ENCODE measurements at regions of chr2 and their contacts with region 1.

Region 1: DNA sequence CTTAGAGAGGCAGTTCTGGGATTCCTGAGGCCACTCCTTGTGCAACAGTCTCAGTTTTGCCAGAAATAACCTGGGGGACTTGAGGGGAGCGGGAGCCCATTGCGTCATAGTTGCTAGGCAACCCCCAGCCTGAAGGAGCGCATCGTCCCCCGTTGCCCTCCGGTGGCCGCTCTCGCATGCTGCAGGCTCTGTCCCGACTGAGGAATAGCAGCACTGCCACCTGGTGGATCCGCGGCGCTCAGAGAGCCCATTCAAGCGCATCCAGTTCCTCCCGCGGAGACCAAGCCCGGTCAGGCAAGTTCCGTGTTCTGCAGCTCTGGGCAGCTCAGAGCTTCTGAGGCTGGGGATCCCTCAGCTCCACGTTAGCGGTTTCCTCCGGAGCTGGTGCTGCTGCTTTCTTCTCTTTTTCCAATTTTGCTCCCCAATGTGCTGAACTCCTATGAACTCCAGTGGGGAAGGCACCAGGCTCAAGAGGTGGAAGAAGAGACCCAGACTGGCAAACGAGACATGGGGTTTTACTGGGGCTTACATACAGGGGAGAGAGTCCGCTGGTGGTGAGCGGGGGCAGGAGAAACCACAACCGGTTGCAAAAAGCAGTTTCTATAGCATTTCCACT is 15.1 kb downstream of the SLC4A3 start:
- DNase-seq: peak; percentile 99
- ATAC-seq: peak; percentile 68

Region 2: GRCh38 chr2:219543601-219544358 is 98.8 kb before region 1 on chr2 and contains the starts of genes CHPF and TMEM198:
- intact Hi-C with region 1: loop called (anchors 5 kb)
- DNase-seq: peak; percentile 99
- ATAC-seq: peak; percentile 92
- total RNA-seq, gene CHPF: 85.9 TPM
- total RNA-seq, gene TMEM198: 2.6 TPM

Region 3: GRCh38 chr2:219560037-219560892 is 82.3 kb before region 1 on chr2:
- intact Hi-C with region 1: loop called (anchors 5 kb)
- DNase-seq: no peak
- ATAC-seq: peak; percentile 30

Region 4: DNA sequence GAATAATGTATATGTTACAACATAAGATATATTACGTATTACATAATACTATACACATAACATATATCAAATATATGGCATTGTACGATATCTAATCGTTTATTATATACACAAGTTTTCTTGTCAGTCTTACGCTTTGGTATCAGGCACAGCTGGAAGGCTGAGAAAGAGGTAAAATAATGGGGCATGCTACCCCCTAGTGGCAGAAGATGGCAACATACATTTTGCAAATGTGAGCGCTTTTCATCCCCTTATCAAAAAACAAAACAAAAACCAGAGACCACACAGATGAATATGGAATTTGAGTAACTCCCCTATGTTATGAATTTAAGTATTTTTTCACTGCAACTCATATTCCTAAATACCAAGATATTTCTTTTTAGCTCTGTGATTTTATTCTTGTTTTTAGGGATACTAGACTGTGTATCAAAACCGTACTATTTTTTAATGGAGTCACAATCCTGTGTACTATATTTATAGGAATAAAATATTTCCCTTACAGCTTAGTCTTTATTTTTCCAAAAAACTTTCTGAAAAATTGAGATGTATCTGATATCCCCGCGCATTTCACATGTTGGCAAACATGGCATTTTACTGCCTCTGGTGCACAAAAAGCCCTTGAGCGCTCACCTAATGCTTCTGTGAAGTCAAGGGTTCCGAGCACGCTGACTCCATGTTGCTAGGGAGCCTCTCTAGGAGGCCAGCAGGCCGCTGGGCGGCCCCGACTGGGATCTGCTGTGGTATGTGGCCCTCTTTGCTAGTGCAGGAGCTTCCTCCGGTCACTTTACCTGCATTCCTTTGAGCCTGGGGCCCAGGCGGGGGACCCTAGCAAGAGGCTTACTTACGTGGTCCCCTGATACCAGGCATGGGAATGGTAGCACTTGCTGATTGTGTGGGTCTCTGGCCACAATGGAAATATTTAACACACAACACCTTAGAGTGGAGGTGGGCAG is 47.4 kb after region 1 on chr2:
- intact Hi-C with region 1: loop called (anchors 5 kb)
- DNase-seq: no peak
- ATAC-seq: peak; percentile 78

Measured in Right ventricle myocardium superior (tissue), 1 donor.